ENCODE measurements at regions of chr4 and their contacts with region 1.

Region 1: GRCh38 chr4:174365018-174365587 is 81.4 kb downstream of the CEP44 start:
- DNase-seq: no peak
- H3K4me3 ChIP-seq: no peak overlapping the region
- H3K27ac ChIP-seq: no peak overlapping the region
- H3K4me1 ChIP-seq: no peaks in the 10 kb centered on the region
- H3K27me3 ChIP-seq: no peaks in the 10 kb centered on the region
- CTCF ChIP-seq: peak; percentile 34 to 39

Region 2: GRCh38 chr4:174483792-174484191 is 118.7 kb after region 1 on chr4:
- CTCF ChIA-PET with region 1: no interaction called
- dilution Hi-C with region 1: no loop called
- in situ Hi-C with region 1: no loop called
- intact Hi-C with region 1: no loop called
- DNase-seq: no peak
- H3K4me3 ChIP-seq: no peak overlapping the region
- H3K27ac ChIP-seq: no peak overlapping the region
- H3K4me1 ChIP-seq: no peaks in the 10 kb centered on the region
- H3K27me3 ChIP-seq: no peaks in the 10 kb centered on the region
- CTCF ChIP-seq: no peak

Region 3: GRCh38 chr4:174522183-174523048 is 157.3 kb after region 1 on chr4 and contains the start of gene HPGD:
- CTCF ChIA-PET with region 1: interaction called, 3 read pairs
- dilution Hi-C with region 1: no loop called
- in situ Hi-C with region 1: no loop called
- intact Hi-C with region 1: loop called (anchors 1 kb)
- DNase-seq: peak; percentile 20
- H3K4me3 ChIP-seq: peak within 1 kb of the TSS; percentile 51 to 60 (median 59)
- H3K27ac ChIP-seq: no peak within 1 kb of the TSS
- H3K4me1 ChIP-seq: peaks cover 7% of the 10 kb centered on the region
- H3K27me3 ChIP-seq: peaks cover 8% of the 10 kb centered on the region
- CTCF ChIP-seq: no peak
- total RNA-seq, gene HPGD: 0.24 to 1.2 TPM